ENCODE measurements at regions of chr7 and their contacts with region 1.

Region 1: GRCh38 chr7:28083164-28083997 is 97.2 kb downstream of the JAZF1 start:
- DNase-seq: peak in 1 of 2 donors; percentile 54
- ATAC-seq: peak; percentile 84
- H3K4me3 ChIP-seq: no peak overlapping the region
- H3K27ac ChIP-seq: peak overlapping the region in 1 of 2 donors; percentile 38
- H3K4me1 ChIP-seq: peaks cover 0 to 9% of the 10 kb centered on the region in 2 donors
- H3K27me3 ChIP-seq: no peaks in the 10 kb centered on the region

Region 2: DNA sequence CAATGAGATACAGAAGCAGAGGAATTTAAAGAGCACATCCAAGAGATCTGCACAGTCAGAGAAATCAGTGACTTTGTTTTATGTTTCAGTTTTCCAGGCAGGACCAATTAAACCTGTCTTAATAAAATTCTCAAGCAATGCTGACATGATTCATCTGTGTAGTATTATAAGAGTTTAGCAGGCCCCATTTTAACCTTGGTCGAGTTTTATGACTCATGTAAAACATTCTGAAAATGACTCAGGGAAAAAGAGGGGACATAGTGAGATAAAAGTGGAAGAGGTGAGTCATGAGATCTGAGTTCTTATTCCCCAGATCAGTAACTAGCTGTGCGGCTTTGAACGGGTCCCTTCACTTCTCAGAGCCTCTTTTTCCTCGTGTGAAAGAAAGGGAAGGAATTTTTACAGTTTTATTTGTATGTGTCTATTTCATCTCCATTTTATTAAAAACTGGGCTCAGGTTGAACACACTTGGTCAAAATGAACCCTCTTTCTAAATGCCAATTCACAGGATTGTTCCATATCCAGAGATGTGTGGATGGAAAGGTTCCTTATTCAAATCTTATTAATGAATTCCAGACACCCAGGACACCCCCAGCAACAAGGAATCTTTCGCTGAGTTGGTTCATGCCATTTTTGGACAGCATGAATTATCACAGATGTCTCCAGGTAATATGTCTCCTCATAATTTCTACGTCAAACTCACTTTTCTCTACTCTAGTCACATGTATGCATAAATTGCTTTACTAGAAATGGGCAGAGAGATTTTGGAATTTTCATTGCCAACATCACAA is 46.0 kb before region 1 on chr7:
- intact Hi-C with region 1: loop called in 1 of 2 experiments (anchors 5 kb)
- DNase-seq: no peak
- ATAC-seq: peak; percentile 85
- H3K4me3 ChIP-seq: no peak overlapping the region
- H3K27ac ChIP-seq: peak overlapping the region; percentile 51 to 59
- H3K4me1 ChIP-seq: no peaks in the 10 kb centered on the region
- H3K27me3 ChIP-seq: no peaks in the 10 kb centered on the region

Measured in aorta (tissue), 5 donors.